ENCODE measurements at regions of chr6 and their contacts with region 1.

Region 1: GRCh38 chr6:131807644-131808459 is at the start of gene ENPP1:
- DNase-seq: no peak
- ATAC-seq: peak; percentile 92
- H3K4me3 ChIP-seq: peak within 1 kb of the TSS; percentile 53 to 81
- H3K27ac ChIP-seq: peak within 1 kb of the TSS; percentile 34; the same call in 1 of the 2 replicates
- H3K4me1 ChIP-seq: peaks cover 5% of the 10 kb centered on the region; the same call in 1 of the 2 replicates
- H3K27me3 ChIP-seq: peaks cover 4% of the 10 kb centered on the region
- CTCF ChIP-seq: no peak
- total RNA-seq, gene ENPP1: 6.8 TPM

Region 2: GRCh38 chr6:131216246-131216645 is 591.6 kb before region 1 on chr6:
- CTCF ChIA-PET with region 1: no interaction called
- POLR2A ChIA-PET with region 1: no interaction called
- in situ Hi-C with region 1: no loop called
- intact Hi-C with region 1: no loop called
- DNase-seq: no peak
- ATAC-seq: no peak
- H3K4me3 ChIP-seq: no peak overlapping the region
- H3K27ac ChIP-seq: no peak overlapping the region
- H3K4me1 ChIP-seq: no peaks in the 10 kb centered on the region
- H3K27me3 ChIP-seq: no peaks in the 10 kb centered on the region
- CTCF ChIP-seq: no peak

Region 3: DNA sequence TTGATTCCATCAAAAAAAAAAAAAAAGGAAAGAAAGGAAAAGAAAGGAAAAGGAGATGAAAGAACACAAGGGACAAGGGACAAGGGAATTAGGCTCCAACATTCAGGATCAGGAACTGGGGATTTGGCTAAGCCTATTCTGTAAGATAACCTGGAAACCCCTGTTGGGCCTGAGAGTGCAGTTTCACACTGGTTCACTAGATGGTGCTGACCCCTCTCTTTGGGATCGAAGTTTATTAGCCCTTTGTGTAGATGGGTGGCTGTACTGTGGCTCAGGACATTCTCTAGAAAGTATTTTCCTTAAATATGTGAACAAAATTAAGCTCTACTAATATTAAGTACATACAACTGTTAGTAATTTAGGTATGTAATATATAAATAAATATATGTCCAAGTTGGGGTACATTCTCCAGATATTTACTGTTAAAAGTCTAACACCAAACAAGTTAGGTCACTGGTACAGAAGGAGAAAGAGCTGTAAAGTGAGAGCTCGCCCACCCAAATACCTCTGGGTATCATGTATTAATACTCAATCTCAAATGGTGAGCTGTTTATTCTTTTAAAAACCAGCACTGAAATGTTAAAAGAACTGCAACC is 112.9 kb before region 1 on chr6:
- CTCF ChIA-PET with region 1: no interaction called
- POLR2A ChIA-PET with region 1: no interaction called
- in situ Hi-C with region 1: no loop called
- intact Hi-C with region 1: loop called (anchors 10 kb)
- DNase-seq: peak; percentile 63
- ATAC-seq: peak; percentile 99
- H3K4me3 ChIP-seq: no peak overlapping the region
- H3K27ac ChIP-seq: no peak overlapping the region
- H3K4me1 ChIP-seq: no peaks in the 10 kb centered on the region
- H3K27me3 ChIP-seq: no peaks in the 10 kb centered on the region
- CTCF ChIP-seq: peak; percentile 89

Region 4: GRCh38 chr6:131733376-131734016 is 74.4 kb before region 1 on chr6:
- CTCF ChIA-PET with region 1: no interaction called
- POLR2A ChIA-PET with region 1: no interaction called
- in situ Hi-C with region 1: no loop called
- intact Hi-C with region 1: no loop called
- DNase-seq: peak; percentile 39
- ATAC-seq: peak; percentile 42; the same call in 1 of the 2 replicates
- H3K4me3 ChIP-seq: no peak overlapping the region
- H3K27ac ChIP-seq: no peak overlapping the region
- H3K4me1 ChIP-seq: no peaks in the 10 kb centered on the region
- H3K27me3 ChIP-seq: peaks cover 2% of the 10 kb centered on the region; the same call in 1 of the 2 replicates
- CTCF ChIP-seq: no peak